Motor neuron (in vitro differentiated cells): ENCODE measurements at regions of chr7 and their contacts with region 1.

Region 1: GRCh38 chr7:47818796-47819606 is 129.3 kb downstream of the PKD1L1 start:
- ATAC-seq: peak in 7 of 8 experiments; percentile 63 to 85 (median 67)
- H3K4me3 ChIP-seq: no peak overlapping the region
- H3K27ac ChIP-seq: no peak overlapping the region
- H3K4me1 ChIP-seq: peaks cover 0 to 4% of the 10 kb centered on the region in 2 donors

Region 2: GRCh38 chr7:47254081-47255006 is 564.7 kb before region 1 on chr7:
- in situ Hi-C with region 1: loop called in 7 of 9 experiments (anchors 25 kb)
- ATAC-seq: peak; percentile 71 to 90 (median 76)
- H3K4me3 ChIP-seq: peak overlapping the region; percentile 39 to 61 (median 50)
- H3K27ac ChIP-seq: peak overlapping the region; percentile 8 to 58
- H3K4me1 ChIP-seq: peaks cover 4 to 6% of the 10 kb centered on the region in 2 donors

Region 3: DNA sequence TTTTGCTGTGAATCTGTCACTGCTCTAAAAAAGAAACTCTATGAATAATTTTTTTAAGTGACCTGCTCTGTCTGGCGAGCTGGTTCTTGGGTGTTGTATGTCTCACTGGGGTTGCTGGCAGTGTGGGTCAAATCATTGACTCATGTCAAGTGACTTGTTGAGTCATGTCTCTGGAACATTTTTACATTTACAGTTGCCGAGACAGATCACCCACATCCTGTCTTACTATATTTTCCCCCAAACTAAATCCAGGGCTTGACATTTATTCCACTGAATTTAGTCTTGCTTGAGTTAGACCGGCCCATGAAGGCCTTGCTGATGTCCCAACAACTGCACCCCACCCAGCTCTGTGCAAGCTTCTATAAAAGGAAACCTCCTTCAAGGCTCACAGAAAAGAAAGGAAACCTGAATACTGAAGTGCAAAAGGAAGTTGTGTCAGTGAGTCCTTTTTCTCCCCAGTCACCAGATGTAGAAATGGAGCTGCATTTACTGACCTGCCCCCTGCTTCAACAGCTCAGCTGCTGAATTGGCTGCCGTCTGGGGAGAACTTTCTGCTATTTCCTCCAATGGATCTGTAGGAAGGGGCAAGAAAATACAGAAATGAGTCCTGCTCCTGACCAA is 527.4 kb before region 1 on chr7:
- in situ Hi-C with region 1: loop called in 1 of 9 experiments (anchors 25 kb)
- ATAC-seq: peak in 4 of 8 experiments; percentile 28 to 89 (median 66)
- H3K4me3 ChIP-seq: no peak overlapping the region
- H3K27ac ChIP-seq: no peak overlapping the region
- H3K4me1 ChIP-seq: no peaks in the 10 kb centered on the region

Region 4: DNA sequence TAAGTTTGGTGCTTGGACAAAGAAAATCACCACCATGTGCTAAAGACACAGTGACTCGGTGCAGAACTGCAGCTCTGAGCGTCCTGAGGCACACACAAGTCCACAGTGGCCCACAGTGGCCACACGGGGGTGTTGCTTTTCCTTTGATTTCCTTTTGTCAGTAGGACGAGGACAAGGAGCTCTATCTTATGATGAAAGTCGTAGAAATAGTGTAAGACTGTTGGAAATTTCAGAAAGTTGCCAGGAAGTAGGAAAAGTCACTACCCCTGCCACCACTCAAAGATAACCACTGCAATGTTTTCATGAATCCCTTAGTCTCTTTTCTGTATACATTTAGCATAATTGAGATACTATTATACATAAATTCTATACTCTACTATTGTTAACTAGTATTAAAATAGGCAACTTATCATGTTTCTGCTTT is 383.1 kb before region 1 on chr7:
- in situ Hi-C with region 1: loop called in 2 of 9 experiments (anchors 10 to 25 kb)
- ATAC-seq: peak; percentile 86 to 100 (median 96)
- H3K4me3 ChIP-seq: no peak overlapping the region
- H3K27ac ChIP-seq: no peak overlapping the region
- H3K4me1 ChIP-seq: no peaks in the 10 kb centered on the region

Region 5: GRCh38 chr7:47485640-47486435 is 333.2 kb before region 1 on chr7:
- in situ Hi-C with region 1: no loop called
- ATAC-seq: peak in 1 of 8 experiments; percentile 2
- H3K4me3 ChIP-seq: no peak overlapping the region
- H3K27ac ChIP-seq: no peak overlapping the region
- H3K4me1 ChIP-seq: peaks cover 20 to 32% of the 10 kb centered on the region in 2 donors

Region 6: DNA sequence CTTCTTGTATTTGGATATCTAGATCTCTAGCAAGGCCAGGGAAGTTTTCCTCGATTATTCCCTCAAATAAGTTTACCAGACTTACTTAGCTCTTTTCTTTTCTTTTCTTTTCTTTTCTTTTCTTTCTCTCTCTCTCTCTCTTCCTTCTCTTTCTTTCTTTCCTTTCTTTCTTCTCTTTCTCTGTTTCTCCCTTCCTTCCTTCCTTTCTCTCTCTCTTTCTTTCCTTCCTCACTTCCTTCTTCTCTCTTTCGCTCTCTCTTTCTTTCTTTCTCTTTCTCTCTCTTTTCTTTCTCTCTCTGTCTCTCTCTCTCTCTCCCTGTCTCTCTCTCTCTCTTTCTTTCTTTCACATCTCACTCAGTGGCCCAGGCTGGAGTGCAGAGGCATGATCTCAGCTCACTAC is 307.0 kb after region 1 on chr7:
- in situ Hi-C with region 1: no loop called
- ATAC-seq: no peak
- H3K4me3 ChIP-seq: no peak overlapping the region
- H3K27ac ChIP-seq: no peak overlapping the region
- H3K4me1 ChIP-seq: no peaks in the 10 kb centered on the region

Region 7: DNA sequence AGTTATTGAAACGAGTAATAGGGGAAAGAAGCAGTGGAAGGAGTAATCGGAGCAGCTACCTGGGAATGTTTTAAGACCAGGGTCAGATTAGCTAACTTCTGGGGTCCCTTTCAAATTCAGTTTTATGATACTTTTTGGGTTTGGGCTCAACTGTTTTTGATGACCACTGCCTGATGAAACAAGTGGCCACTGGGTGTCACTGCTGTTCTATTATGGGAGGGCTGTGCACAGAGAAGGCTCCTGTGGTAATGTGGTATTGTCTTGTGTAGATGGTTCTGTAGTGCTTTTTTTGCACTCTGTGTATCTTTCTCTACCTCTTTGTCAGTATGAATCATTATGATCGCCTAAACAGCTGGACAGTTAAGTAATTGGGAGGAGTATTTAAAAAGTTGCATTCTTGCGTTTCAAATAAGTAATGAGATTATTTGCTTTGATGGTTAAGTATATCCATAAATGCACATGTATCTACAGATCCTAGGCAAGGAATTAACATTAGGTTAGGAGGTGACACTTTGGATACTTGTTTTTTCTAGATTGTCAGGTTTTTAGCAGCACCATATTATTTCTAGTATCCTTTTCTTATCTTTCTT is 480.7 kb after region 1 on chr7:
- in situ Hi-C with region 1: no loop called
- ATAC-seq: peak; percentile 87 to 99 (median 90)
- H3K4me3 ChIP-seq: no peak overlapping the region
- H3K27ac ChIP-seq: no peak overlapping the region
- H3K4me1 ChIP-seq: peaks cover 0 to 13% of the 10 kb centered on the region in 2 donors